Panc1 (cell line): ENCODE measurements at regions of chr3 and their contacts with region 1.

Region 1: GRCh38 chr3:87082796-87083440 is 92.0 kb upstream of the VGLL3 start:
- DNase-seq: peak; percentile 46
- ATAC-seq: peak; percentile 89
- H3K4me3 ChIP-seq: peak overlapping the region in 1 of 2 experiments; percentile 32; a peak in 2 of 4 replicates
- H3K27ac ChIP-seq: no peak overlapping the region
- H3K4me1 ChIP-seq: no peaks in the 10 kb centered on the region
- H3K27me3 ChIP-seq: no peaks in the 10 kb centered on the region
- CTCF ChIP-seq: peak; percentile 69

Region 2: GRCh38 chr3:86774082-86774691 is 308.7 kb before region 1 on chr3:
- CTCF ChIA-PET with region 1: interaction called, 5 read pairs
- POLR2A ChIA-PET with region 1: no interaction called
- in situ Hi-C with region 1: no loop called
- intact Hi-C with region 1: loop called (anchors 2 kb)
- DNase-seq: no peak
- ATAC-seq: no peak
- H3K4me3 ChIP-seq: no peak overlapping the region
- H3K27ac ChIP-seq: no peak overlapping the region
- H3K4me1 ChIP-seq: no peaks in the 10 kb centered on the region
- H3K27me3 ChIP-seq: no peaks in the 10 kb centered on the region
- CTCF ChIP-seq: peak; percentile 18; the same call in 1 of the 2 replicates

Region 3: GRCh38 chr3:86969500-86970189 is 113.3 kb before region 1 on chr3:
- CTCF ChIA-PET with region 1: no interaction called
- POLR2A ChIA-PET with region 1: no interaction called
- in situ Hi-C with region 1: no loop called
- intact Hi-C with region 1: loop called (anchors 5 kb)
- DNase-seq: no peak
- ATAC-seq: no peak
- H3K4me3 ChIP-seq: no peak overlapping the region
- H3K27ac ChIP-seq: no peak overlapping the region
- H3K4me1 ChIP-seq: no peaks in the 10 kb centered on the region
- H3K27me3 ChIP-seq: no peaks in the 10 kb centered on the region
- CTCF ChIP-seq: peak; percentile 66

Region 4: GRCh38 chr3:87900061-87900460 is 817.1 kb after region 1 on chr3:
- CTCF ChIA-PET with region 1: no interaction called
- POLR2A ChIA-PET with region 1: no interaction called
- in situ Hi-C with region 1: no loop called
- intact Hi-C with region 1: no loop called
- DNase-seq: no peak
- ATAC-seq: no peak
- H3K4me3 ChIP-seq: no peak overlapping the region
- H3K27ac ChIP-seq: no peak overlapping the region
- H3K4me1 ChIP-seq: no peaks in the 10 kb centered on the region
- H3K27me3 ChIP-seq: no peaks in the 10 kb centered on the region
- CTCF ChIP-seq: peak; percentile 24; the same call in 1 of the 2 replicates